ENCODE measurements at regions of chr21 and their contacts with region 1.

Region 1: DNA sequence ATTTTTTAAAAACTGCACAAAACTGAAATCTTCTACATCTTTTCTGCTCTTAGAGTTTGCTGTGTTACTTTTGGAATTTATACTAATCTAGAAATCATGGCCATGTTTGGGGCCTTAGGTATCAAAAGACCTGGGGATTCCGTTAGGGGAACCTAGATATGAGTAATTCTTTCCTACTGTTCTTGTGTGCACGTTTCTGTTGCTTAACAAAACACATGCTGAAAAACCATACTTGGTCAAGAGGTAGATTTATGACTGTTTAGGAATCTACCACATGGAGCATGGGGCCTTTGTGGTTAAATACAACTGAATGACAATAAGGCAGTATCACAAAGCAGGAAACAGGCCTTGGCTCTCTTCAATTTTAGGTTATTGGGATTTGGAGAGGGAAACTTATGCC is 291.9 kb upstream of the USP25 start:
- DNase-seq: no peak
- H3K4me3 Mint-ChIP-seq: no peak overlapping the region
- H3K27ac Mint-ChIP-seq: no peak overlapping the region
- H3K4me1 Mint-ChIP-seq: peaks cover 13% of the 10 kb centered on the region
- H3K27me3 Mint-ChIP-seq: no peaks in the 10 kb centered on the region

Region 2: DNA sequence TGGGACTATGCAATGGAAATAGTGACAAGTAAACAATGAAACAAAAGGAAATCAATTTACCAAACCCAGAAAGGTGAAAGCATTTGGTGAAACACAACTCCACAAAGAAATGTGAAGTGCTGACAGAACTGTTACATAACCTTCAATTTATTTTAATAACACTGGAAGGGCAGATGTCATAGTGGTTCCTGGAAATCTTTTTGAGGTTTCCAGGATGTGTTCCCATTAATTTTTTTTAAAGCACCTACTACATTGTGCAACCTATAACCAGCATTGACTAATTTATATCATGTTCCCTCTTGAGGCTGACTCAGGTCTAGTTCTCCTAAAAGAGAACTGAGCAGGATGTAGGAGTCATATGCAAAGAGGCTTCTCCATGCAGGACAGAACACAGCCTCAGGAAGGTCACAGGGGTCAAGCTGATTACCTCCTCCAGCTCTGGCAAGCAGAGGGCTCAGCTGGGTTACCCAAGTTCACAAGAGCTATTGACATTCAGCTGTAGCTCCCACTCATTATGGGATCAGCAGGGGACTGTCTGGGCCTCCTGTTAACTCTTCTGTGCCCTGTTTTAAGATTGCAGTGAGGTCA is 216.0 kb before region 1 on chr21:
- CTCF ChIA-PET with region 1: no interaction called
- POLR2A ChIA-PET with region 1: no interaction called
- intact Hi-C with region 1: loop called (anchors 5 kb)
- DNase-seq: peak; percentile 45
- H3K4me3 Mint-ChIP-seq: no peak overlapping the region
- H3K27ac Mint-ChIP-seq: peak overlapping the region; percentile 18
- H3K4me1 Mint-ChIP-seq: peaks cover 8% of the 10 kb centered on the region
- H3K27me3 Mint-ChIP-seq: peaks cover 3% of the 10 kb centered on the region

Region 3: GRCh38 chr21:15400905-15401304 is 37.0 kb before region 1 on chr21:
- CTCF ChIA-PET with region 1: no interaction called
- POLR2A ChIA-PET with region 1: no interaction called
- intact Hi-C with region 1: no loop called
- DNase-seq: no peak
- H3K4me3 Mint-ChIP-seq: no peak overlapping the region
- H3K27ac Mint-ChIP-seq: no peak overlapping the region
- H3K4me1 Mint-ChIP-seq: no peaks in the 10 kb centered on the region
- H3K27me3 Mint-ChIP-seq: no peaks in the 10 kb centered on the region

Region 4: DNA sequence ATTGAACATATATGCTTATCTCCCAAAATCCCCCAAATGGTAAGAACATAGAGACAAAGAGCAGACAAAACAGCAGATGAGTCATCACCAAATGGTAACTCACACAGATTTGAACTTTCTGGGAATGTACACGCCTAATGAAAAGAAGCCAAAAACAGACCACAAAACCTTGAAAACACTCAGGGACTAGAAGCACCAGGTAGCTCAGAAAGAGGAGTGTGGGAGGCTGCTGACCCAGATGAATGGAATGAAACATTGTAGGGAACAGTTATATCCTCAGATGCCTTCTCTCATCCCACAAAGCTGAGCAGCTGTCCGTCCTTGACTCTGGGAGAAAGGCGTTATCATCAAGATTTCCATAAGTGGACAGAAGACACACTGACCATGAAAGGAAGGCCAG is 15.1 kb before region 1 on chr21:
- CTCF ChIA-PET with region 1: no interaction called
- POLR2A ChIA-PET with region 1: no interaction called
- intact Hi-C with region 1: loop called (anchors 1 kb)
- DNase-seq: peak; percentile 15
- H3K4me3 Mint-ChIP-seq: no peak overlapping the region
- H3K27ac Mint-ChIP-seq: peak overlapping the region; percentile 16
- H3K4me1 Mint-ChIP-seq: peaks cover 32% of the 10 kb centered on the region
- H3K27me3 Mint-ChIP-seq: no peaks in the 10 kb centered on the region